Activated CD4-positive, alpha-beta memory T cell treated with anti-CD3 and anti-CD28 coated beads for 36 hours (primary cell): ENCODE measurements at regions of chrX and their contacts with region 1.

Region 1: GRCh38 chrX:41561045-41561444 is 113.9 kb downstream of the NYX start:
- DNase-seq: peak; percentile 52
- H3K4me3 Mint-ChIP-seq: no peak overlapping the region
- H3K27ac Mint-ChIP-seq: peak overlapping the region; percentile 62
- H3K4me1 Mint-ChIP-seq: peaks cover 44% of the 10 kb centered on the region
- H3K27me3 Mint-ChIP-seq: no peaks in the 10 kb centered on the region

Region 2: GRCh38 chrX:41275661-41276609 is 285.1 kb before region 1 on chrX:
- CTCF ChIA-PET with region 1: no interaction called
- POLR2A ChIA-PET with region 1: no interaction called
- intact Hi-C with region 1: loop called (anchors 10 kb)
- DNase-seq: peak; percentile 68
- H3K4me3 Mint-ChIP-seq: peak overlapping the region; percentile 75
- H3K27ac Mint-ChIP-seq: peak overlapping the region; percentile 33
- H3K4me1 Mint-ChIP-seq: no peaks in the 10 kb centered on the region
- H3K27me3 Mint-ChIP-seq: no peaks in the 10 kb centered on the region

Region 3: DNA sequence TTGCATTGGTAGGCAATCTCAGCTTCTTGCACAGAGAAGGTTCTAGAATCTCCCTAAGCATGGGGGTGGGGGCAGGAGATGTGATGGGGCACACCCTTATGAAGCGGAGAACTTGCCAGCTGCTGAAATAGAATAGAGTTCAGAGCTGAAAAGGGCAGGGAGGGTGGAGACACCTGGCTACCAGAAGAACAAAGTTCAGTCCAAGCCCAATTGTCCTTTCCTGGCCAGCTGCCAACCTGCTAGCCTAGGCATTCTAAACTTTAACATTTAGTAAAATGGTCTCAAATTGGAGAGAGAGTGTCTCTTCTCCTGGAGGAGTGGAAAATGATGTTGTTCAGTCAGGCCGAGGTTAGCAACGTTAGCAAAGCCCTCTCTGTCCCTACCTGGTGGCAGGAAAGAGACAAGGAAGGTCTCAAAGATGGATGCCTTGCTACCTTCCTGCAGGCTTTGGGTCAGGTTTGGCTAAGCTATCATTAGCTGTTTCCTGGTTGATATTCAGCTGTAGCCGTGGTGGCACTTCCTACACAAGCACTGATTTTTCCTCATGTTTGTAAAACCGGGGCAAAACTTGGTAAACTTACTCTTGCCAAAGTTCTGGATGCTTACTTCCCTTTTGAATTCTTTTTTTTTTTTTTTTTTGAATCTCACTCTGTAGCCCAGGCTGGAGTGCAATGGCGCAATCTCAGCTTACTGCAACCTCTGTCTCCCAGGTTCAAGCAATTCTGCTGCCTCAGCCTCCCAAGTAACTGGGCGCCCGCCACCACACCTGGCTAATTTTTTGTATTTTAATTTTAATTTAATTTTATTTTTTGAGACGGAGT is 148.6 kb before region 1 on chrX:
- CTCF ChIA-PET with region 1: no interaction called
- POLR2A ChIA-PET with region 1: no interaction called
- intact Hi-C with region 1: no loop called
- DNase-seq: peak; percentile 11
- H3K4me3 Mint-ChIP-seq: no peak overlapping the region
- H3K27ac Mint-ChIP-seq: no peak overlapping the region
- H3K4me1 Mint-ChIP-seq: no peaks in the 10 kb centered on the region
- H3K27me3 Mint-ChIP-seq: no peaks in the 10 kb centered on the region

Region 4: DNA sequence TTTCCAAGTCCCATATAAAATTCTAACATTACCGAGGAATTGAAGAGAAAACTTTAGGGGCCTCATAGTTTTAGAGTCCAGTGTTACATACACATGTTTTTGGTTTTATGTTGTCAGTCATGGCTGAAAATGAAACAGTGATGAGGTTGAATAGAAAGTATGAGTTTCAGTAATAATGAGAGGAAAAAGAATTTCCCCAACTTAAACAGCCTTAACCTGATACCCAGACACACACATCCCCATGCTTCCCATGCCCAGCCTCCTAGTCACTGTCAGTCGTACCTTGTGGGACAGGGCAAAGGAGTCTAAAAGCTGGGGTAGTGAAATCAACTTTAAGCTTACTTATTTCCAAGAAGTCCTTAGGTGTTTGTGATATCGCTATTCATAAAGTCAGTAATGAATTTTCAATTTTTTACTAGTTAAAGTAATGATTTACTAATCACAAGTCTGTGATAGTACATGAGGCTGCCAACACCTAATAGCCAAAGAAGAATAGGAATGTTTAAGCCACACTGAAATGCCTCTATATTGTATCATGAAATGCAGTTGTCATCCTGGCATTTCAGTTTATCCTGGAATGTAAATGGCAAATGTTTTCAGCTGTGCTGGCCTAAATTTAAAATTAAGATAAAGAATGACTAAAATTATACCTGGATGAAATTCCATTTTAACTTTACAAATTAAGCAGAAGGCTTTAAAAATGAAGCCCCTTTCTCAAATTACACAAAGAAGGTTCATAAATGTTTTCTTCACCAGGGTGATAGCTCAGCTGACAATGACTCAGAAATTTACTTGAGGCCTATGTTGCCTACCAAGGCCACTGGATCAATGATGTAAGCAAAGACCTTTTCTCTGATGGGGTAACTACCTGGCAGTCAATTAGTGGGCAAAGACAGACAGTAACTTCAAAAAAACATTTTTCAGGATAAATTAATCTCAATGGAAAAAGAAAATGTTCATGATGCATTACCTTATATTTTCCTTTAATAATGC is 103.6 kb after region 1 on chrX:
- CTCF ChIA-PET with region 1: no interaction called
- POLR2A ChIA-PET with region 1: no interaction called
- intact Hi-C with region 1: loop called (anchors 2 kb)
- DNase-seq: peak; percentile 33
- H3K4me3 Mint-ChIP-seq: no peak overlapping the region
- H3K27ac Mint-ChIP-seq: peak overlapping the region; percentile 73
- H3K4me1 Mint-ChIP-seq: peaks cover 47% of the 10 kb centered on the region
- H3K27me3 Mint-ChIP-seq: no peaks in the 10 kb centered on the region

Region 5: GRCh38 chrX:41759817-41760216 is 198.8 kb after region 1 on chrX:
- CTCF ChIA-PET with region 1: interaction called, 23 read pairs
- POLR2A ChIA-PET with region 1: no interaction called
- intact Hi-C with region 1: loop called (anchors 1 kb)
- DNase-seq: no peak
- H3K4me3 Mint-ChIP-seq: no peak overlapping the region
- H3K27ac Mint-ChIP-seq: no peak overlapping the region
- H3K4me1 Mint-ChIP-seq: peaks cover 8% of the 10 kb centered on the region
- H3K27me3 Mint-ChIP-seq: no peaks in the 10 kb centered on the region